Ascending aorta (tissue), 2 donors: ENCODE measurements at regions of chr1 and their contacts with region 1.

Region 1: GRCh38 chr1:67535474-67535873 is 105.3 kb upstream of the SERBP1 start:
- DNase-seq: peak; percentile 33 to 90
- H3K4me3 ChIP-seq: no peak overlapping the region
- H3K27ac ChIP-seq: no peak overlapping the region
- H3K4me1 ChIP-seq: peaks cover 0 to 18% of the 10 kb centered on the region in 2 donors
- H3K27me3 ChIP-seq: no peaks in the 10 kb centered on the region
- CTCF ChIP-seq: peak; percentile 88 to 97 (median 94)

Region 2: DNA sequence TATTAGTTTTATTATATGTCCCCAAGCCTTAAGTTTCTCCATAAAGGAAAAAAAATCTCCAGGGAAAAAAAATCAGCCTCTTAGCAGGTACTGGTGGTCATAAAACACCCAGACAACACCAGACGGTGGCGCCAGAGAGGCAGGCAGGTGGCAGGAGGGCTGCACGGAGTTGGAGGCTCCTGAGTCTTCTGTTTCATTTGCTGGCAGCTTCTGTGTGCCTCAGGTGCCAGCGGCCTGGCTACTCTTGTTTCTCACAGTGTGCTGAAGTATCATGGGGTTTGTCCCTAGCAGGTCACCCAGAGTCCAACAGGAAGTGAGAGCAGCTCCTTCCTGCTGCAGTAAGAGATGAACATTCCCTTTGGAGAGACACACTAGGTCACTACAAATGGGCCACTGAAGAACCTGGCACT is 26.2 kb after region 1 on chr1:
- intact Hi-C with region 1: loop called (anchors 2 kb)
- DNase-seq: peak; percentile 66 to 96
- H3K4me3 ChIP-seq: no peak overlapping the region
- H3K27ac ChIP-seq: peak overlapping the region in 1 of 2 donors; percentile 30
- H3K4me1 ChIP-seq: peaks cover 2 to 12% of the 10 kb centered on the region in 2 donors
- H3K27me3 ChIP-seq: no peaks in the 10 kb centered on the region
- CTCF ChIP-seq: peak; percentile 85 to 92 (median 91)

Region 3: DNA sequence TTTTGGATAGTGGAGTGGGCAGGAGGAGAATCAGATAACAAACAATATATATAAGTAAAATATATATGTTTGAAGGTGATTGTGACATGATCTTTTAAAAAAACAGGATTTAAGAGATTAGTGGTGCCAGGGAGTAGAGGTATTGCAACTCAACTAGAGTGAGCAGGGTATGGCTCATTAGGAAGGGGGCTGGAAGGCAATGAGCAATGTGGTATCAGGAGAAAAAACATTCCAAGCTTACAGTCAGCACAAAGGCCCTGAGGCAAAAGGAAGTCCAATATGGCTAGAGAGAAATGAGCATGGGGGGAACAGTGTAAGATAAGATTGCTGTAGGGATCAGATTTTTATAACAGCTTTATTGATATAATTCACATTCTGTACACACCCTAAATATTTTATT is 144.2 kb after region 1 on chr1:
- intact Hi-C with region 1: loop called (anchors 1 kb)
- DNase-seq: no peak
- H3K4me3 ChIP-seq: no peak overlapping the region
- H3K27ac ChIP-seq: no peak overlapping the region
- H3K4me1 ChIP-seq: peaks cover 3 to 10% of the 10 kb centered on the region in 2 donors
- H3K27me3 ChIP-seq: no peaks in the 10 kb centered on the region
- CTCF ChIP-seq: no peak

Region 4: GRCh38 chr1:67832737-67833601 is 297.5 kb after region 1 on chr1 and contains the start of gene GNG12:
- intact Hi-C with region 1: loop called (anchors 5 kb)
- DNase-seq: peak; percentile 14 to 81
- H3K4me3 ChIP-seq: peak within 1 kb of the TSS; percentile 70 to 85
- H3K27ac ChIP-seq: peak within 1 kb of the TSS; percentile 93 to 96
- H3K4me1 ChIP-seq: peaks cover 4 to 29% of the 10 kb centered on the region in 2 donors
- H3K27me3 ChIP-seq: no peaks in the 10 kb centered on the region
- CTCF ChIP-seq: no peak
- total RNA-seq, gene GNG12: 71.2 TPM

Region 5: DNA sequence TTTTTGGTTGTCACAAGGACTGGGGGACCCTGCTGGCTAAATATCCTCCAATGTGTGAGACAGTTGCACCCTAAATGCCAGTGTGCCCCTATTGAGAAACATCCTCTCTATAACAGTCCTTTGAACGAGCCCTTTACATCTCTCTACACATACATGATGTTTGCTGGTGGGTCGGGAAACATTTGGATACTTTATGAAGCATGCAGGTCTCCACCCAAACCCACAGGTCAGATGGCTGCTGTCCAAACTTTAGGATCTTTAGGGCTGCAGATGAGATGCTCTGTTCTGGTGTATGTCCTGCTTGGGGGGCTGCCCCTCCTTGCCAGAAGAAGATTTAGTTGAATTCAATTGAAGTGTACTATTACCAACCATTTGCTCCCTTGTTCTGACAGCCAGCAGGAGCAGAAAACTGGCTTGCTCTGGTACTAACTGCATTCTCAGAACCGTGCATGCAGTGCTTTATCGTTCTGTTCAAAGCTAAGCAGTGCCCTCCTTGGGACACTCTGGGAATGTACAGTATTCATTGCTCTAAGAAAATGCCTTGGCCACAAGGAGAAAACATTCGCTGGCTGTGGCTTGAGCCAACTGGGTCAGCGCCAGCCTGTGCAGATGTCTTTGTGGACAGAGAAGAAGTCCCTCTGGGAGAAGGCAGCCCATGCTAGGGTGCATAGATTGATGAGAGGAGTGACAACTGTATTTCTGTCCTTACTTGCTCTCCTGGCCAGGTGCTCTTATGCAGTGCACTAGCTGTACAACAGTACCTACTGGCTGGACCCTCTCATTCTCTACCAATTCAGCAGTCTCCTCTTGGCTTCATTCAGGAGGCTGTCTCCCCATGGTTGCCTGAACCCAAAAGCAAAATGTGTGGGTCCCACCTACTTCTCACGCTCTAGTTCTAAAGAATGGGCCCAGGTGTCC is 576.3 kb after region 1 on chr1:
- intact Hi-C with region 1: loop called (anchors 2 kb)
- DNase-seq: peak in 1 of 2 donors; percentile 76
- H3K4me3 ChIP-seq: no peak overlapping the region
- H3K27ac ChIP-seq: peak overlapping the region in 1 of 2 donors; percentile 12
- H3K4me1 ChIP-seq: peaks cover 0 to 12% of the 10 kb centered on the region in 2 donors
- H3K27me3 ChIP-seq: no peaks in the 10 kb centered on the region
- CTCF ChIP-seq: peak; percentile 46 to 60 (median 51)

Region 6: GRCh38 chr1:68409426-68409825 is 874.0 kb after region 1 on chr1:
- intact Hi-C with region 1: no loop called
- DNase-seq: no peak
- H3K4me3 ChIP-seq: no peak overlapping the region
- H3K27ac ChIP-seq: no peak overlapping the region
- H3K4me1 ChIP-seq: no peaks in the 10 kb centered on the region
- H3K27me3 ChIP-seq: no peaks in the 10 kb centered on the region
- CTCF ChIP-seq: no peak